Activated naive CD4-positive, alpha-beta T cell treated with anti-CD3 and anti-CD28 coated beads for 36 hours (primary cell): ENCODE measurements at regions of chr6 and their contacts with region 1.

Region 1: DNA sequence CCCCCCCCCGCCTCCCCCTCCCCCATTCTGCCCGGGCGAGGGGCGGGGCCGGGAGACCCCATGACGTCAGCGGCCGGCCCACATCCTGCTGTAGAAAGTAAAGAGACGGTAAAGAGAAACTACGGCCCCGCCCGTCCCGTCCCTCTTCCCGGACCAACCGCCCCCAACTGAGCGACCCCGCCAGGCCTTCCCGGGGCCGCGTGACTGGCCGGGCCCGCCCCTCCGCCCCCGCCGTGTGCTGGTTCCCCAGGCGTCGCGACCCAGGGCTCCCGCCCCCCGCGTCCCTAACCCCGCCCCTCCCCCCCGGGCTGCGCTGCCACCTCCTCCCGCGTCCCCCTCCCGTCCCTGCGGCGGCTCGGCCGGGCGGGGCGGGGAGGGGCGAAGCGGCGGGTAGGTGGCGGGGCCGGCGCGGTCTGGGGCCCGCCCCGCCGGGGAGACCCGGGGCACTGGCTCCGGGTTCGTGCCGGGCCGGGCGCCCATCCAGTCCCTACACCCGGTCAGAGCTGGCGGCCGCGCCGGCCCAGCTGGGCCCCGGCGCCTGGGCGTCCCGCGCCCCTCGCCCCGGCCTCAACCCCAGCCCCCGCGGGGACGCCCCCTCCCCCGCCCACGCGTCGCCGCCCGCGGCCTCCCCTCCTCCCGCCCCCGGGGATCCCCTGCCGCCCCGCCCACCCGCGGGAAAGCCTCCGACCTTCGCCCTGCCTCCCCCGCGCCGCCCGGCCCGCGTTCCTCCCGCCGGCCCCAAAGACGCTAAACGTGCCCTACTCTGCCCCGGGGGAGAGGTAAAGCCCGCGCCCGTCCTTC is 636 bp upstream of the HIVEP1 start:
- DNase-seq: peak; percentile 98
- H3K4me3 Mint-ChIP-seq: peak overlapping the region; percentile 89
- H3K27ac Mint-ChIP-seq: peak overlapping the region; percentile 53
- H3K4me1 Mint-ChIP-seq: peaks cover 49% of the 10 kb centered on the region
- H3K27me3 Mint-ChIP-seq: no peaks in the 10 kb centered on the region

Region 2: DNA sequence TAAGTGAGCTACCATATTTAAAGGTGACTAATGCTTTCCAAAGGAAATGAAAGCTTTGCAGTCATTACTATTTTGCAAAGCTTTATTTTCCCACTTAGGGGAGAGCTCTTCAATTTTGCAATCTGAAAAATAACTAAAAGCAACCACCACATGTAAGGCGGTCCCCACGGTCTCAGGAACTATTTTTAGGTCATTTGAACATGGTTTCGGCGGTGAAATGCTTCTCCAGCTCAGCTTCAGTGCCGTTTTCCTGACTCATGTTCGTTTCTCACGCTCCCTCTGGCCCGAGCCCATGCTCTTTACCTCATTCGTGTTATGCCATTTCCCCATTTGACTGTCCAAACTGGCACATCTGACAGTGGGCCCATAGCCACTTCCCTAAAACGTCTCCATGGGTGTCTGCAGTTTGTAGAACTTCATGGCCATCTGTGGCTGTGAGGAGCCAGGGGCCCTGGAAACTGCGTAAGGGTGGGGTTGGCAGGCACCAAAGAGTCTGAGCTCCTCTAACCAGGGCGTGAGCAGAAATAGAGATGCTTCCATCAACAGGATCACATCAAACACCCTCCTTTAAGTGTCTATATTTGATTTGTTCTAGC is 279.3 kb before region 1 on chr6:
- CTCF ChIA-PET with region 1: no interaction called
- intact Hi-C with region 1: loop called (anchors 1 kb)
- DNase-seq: peak; percentile 87
- H3K4me3 Mint-ChIP-seq: peak overlapping the region; percentile 3
- H3K27ac Mint-ChIP-seq: peak overlapping the region; percentile 92
- H3K4me1 Mint-ChIP-seq: peaks cover 63% of the 10 kb centered on the region
- H3K27me3 Mint-ChIP-seq: no peaks in the 10 kb centered on the region

Region 3: DNA sequence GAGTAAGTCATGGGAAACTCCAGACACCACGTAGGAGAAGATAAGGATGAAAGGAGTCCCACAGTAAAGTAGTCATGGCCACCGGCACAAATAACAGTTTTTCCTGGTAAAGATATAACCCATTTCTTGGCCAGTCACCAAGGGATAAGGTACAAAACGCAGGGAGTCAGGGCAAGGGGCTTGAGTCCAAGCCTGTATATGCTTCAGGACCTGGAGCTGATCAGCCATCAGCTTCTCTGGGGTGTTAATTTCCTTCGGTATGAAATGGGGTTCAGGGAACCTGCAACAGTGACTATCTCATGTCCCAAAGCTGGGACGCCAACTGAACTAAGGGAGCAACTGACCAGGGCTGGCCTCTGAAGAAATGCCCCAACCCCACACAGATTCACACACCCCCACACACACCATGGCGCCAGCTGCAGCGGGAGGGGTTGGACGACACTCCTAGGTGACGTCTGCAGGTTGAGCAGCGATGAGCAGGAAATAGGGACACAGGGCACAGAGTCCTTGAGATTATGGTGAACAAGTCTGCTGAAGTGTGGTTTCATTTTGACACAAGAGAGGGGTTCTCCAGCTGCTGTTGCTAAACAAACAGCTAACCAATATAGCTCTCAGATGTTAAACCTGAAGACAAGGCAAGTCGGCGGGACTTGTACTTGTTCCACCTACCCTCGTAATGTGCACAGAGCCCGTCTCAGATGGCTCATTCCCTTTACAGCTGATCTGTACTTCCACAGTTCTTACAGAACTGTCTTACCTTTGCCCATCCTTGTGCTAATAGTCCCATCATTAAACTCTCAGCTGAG is 225.5 kb before region 1 on chr6:
- CTCF ChIA-PET with region 1: no interaction called
- intact Hi-C with region 1: loop called (anchors 1 kb)
- DNase-seq: peak; percentile 62
- H3K4me3 Mint-ChIP-seq: no peak overlapping the region
- H3K27ac Mint-ChIP-seq: peak overlapping the region; percentile 23
- H3K4me1 Mint-ChIP-seq: peaks cover 7% of the 10 kb centered on the region
- H3K27me3 Mint-ChIP-seq: no peaks in the 10 kb centered on the region

Region 4: GRCh38 chr6:11900662-11901598 is 110.5 kb before region 1 on chr6:
- CTCF ChIA-PET with region 1: no interaction called
- intact Hi-C with region 1: loop called (anchors 2 kb)
- DNase-seq: no peak
- H3K4me3 Mint-ChIP-seq: peak overlapping the region; percentile 30
- H3K27ac Mint-ChIP-seq: no peak overlapping the region
- H3K4me1 Mint-ChIP-seq: peaks cover 20% of the 10 kb centered on the region
- H3K27me3 Mint-ChIP-seq: no peaks in the 10 kb centered on the region

Region 5: GRCh38 chr6:11978169-11978987 is 33.1 kb before region 1 on chr6:
- CTCF ChIA-PET with region 1: no interaction called
- intact Hi-C with region 1: loop called (anchors 1 kb)
- DNase-seq: no peak
- H3K4me3 Mint-ChIP-seq: no peak overlapping the region
- H3K27ac Mint-ChIP-seq: no peak overlapping the region
- H3K4me1 Mint-ChIP-seq: peaks cover 22% of the 10 kb centered on the region
- H3K27me3 Mint-ChIP-seq: no peaks in the 10 kb centered on the region

Region 6: DNA sequence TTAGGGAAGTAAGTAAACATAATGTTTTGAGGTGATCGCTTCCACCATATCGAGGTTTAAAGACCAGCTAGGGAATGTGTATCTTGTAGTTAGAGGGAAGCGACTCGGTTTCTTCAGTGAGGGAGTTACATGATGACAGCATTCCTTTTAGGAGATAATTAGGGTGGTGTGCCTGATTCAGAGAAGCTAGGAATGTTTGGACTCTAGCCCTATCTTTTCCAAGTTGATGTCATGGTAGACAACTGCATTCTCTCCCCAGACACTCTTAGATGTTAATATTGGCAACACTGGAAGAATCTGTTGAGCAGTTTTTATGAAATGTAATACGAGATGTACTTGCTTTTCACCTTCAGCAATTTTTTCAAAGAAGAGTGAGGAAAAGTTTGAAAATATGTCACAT is 12.2 kb before region 1 on chr6:
- CTCF ChIA-PET with region 1: no interaction called
- intact Hi-C with region 1: no loop called
- DNase-seq: no peak
- H3K4me3 Mint-ChIP-seq: no peak overlapping the region
- H3K27ac Mint-ChIP-seq: no peak overlapping the region
- H3K4me1 Mint-ChIP-seq: peaks cover 13% of the 10 kb centered on the region
- H3K27me3 Mint-ChIP-seq: no peaks in the 10 kb centered on the region

Region 7: GRCh38 chr6:12051861-12052368 is 40.4 kb after region 1 on chr6:
- CTCF ChIA-PET with region 1: no interaction called
- intact Hi-C with region 1: loop called (anchors 1 kb)
- DNase-seq: peak; percentile 83
- H3K4me3 Mint-ChIP-seq: peak overlapping the region; percentile 36
- H3K27ac Mint-ChIP-seq: peak overlapping the region; percentile 88
- H3K4me1 Mint-ChIP-seq: peaks cover 76% of the 10 kb centered on the region
- H3K27me3 Mint-ChIP-seq: no peaks in the 10 kb centered on the region

Region 8: DNA sequence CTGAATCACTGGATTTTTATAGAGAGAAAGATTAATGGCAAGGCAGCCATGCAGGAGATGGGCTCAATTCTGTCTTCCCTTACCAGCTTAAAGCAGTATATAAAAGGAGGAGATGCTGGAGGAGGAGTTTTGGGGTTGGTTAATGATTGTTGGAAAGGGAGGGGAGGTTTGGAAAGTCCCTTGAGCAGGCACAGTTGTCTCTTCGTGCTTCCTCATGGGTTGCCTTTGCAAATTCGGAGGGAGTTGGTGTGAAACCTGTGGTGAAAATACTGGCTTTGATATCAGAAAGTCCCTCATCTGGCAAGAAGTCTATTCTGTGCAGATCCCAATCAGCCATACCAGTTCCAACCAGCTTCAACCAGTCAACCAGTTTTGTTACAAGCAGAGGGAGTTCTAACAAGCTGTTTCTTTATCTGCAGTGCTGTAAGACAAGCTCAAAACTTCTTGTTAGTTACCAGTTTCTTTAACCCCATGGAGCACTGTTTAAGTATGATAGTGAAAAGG is 107.7 kb after region 1 on chr6:
- CTCF ChIA-PET with region 1: no interaction called
- intact Hi-C with region 1: loop called (anchors 1 kb)
- DNase-seq: peak; percentile 73
- H3K4me3 Mint-ChIP-seq: peak overlapping the region; percentile 11
- H3K27ac Mint-ChIP-seq: peak overlapping the region; percentile 77
- H3K4me1 Mint-ChIP-seq: peaks cover 49% of the 10 kb centered on the region
- H3K27me3 Mint-ChIP-seq: no peaks in the 10 kb centered on the region